AG04449 (cell line): ENCODE measurements at regions of chr19 and their contacts with region 1.

Region 1: DNA sequence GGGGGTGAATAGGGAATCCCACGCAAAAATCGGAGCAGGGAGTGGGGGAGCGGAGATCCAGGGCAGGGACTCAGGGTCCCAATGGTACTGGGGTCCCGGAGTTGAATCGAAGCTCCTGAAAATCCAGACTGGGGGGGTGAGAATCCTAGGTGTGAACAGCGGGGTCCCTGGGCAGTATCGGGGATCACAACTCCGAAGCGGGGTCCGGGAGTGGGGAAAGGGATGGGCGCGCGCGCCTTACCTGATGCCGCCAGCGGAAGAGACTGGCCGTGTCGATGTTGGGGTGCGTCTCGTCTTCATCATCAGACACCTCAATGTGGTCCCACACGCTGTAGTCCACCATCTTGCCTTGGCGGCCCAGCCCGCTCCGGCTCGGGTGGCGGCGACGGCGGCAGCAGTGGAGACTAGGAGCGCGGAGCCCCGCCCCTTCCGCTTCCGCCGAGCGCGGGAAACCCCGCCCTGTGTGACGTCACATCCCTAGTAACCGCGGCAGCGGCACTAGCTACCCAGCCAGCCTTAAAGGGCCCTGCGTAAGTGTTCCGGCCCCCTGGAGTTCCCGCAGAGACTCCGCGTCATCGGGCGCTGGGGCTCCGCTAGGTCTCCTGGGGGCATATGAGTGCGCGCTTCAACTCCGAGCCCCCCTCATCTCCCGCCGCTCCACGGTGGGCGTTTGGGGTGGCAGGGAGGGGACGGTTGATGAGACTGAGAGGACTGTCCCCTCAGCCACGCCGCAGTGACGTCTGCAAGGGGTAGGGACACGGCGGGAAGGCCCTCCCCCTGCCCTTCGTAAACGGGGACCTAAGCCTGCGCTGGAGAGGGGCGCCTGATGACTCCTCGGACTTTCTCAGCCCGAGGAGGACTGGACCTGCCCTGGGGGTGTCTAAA is at the start of gene CDC37:
- DNase-seq: peak; percentile 63
- H3K4me3 ChIP-seq: peak within 1 kb of the TSS; percentile 98
- CTCF ChIP-seq: no peak

Region 2: DNA sequence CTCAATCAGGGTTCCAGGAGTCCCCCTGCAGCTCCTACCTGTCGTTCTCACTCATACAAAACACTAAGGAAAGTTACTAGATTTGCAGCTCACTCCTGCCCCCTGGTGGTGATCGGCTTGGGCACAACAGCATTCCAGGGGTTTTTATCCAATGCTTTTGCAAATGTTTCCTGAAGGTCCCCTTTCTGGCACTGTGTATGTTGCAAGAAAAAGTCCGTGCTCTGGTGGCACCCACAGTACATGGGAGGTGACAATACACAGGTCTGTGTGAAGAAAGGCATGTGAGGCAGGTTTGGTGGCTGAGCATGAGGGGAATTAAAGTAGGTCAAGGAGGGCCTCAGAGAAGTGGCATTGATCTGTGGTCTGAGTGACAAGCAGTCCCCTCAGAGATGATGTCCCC is 14.4 kb before region 1 on chr19:
- CTCF ChIA-PET with region 1: interaction called, 70 read pairs
- POLR2A ChIA-PET with region 1: interaction called, 3 read pairs
- DNase-seq: no peak
- H3K4me3 ChIP-seq: no peak overlapping the region
- CTCF ChIP-seq: peak; percentile 84

Region 3: DNA sequence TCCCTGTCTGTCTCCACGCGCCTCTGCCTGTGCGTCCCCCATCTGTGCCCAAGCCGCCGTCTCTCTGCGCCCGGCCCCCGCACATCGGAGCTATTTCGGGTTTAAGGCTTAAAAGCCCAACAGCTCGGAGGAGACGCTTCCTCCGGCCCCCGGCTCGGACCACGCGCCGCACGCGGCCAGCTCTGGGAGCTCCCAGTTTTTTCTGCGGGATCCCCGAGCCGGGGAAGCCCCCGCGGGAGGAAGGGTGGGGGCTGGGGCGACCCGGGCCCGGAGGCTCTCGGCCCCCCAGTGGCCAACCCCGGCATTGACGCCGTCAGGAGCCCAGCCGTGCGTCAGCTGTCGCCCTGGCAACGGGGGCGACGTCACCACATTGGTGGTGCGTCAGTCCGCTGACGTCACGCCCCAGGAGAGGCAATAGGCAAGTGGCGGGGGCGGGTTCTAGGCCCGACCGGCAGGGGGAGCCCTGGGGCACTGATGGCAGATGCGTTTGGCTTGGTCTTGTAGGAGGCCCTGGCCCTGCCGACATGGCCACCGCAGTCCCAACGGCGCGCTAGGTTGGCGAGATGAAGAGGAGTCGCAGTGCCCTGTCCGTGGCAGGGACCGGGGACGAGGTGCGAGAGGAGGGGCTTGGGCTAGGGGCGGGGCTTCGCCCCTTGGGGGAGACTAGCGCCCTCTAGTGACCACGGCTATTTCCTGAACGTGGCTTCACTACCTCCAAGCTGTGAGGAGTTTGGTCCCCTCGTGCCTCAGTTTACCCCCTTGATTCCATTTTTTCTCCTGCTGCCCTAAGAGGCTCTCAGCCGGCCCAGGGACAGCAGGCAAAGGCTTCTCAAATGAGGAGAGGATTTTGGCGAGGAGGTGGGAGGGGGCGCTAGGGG is 13.2 kb after region 1 on chr19:
- CTCF ChIA-PET with region 1: interaction called, 392 read pairs
- POLR2A ChIA-PET with region 1: interaction called, 6 read pairs
- DNase-seq: no peak
- H3K4me3 ChIP-seq: peak overlapping the region; percentile 64
- CTCF ChIP-seq: peak; percentile 83

Region 4: DNA sequence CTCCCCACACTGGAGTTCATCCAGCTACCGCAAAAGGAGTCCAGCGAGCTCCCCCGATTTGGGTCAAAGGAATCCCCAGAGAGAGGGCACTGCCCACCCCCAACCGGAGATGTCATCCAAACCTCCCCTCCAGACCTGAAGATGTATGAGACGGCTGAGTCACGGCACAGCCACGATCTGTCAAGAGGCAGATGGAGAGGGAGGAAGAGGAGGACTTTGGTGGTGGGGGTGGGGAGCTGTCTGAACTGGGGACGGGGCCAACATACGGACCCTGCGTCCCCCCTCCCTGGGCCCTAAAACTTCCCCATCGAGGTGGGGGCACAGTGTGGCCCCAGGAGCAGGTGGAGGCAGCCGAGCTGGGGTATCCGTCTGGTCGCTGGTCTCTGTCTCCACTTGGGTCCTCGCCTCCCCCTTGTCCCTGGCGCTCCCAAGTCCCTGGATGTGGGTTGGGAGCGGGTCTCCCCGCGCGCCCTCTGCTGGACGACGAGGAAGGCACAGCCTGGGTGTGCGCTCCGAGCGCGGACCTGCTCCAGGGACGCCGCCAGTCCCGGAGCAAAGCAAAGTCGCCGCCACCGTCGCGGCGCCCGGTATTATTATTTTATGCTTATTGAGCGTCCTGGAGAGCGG is 20.7 kb after region 1 on chr19:
- CTCF ChIA-PET with region 1: interaction called, 392 read pairs
- POLR2A ChIA-PET with region 1: interaction called, 4 read pairs
- DNase-seq: no peak
- H3K4me3 ChIP-seq: peak overlapping the region; percentile 52
- CTCF ChIP-seq: peak; percentile 98

Region 5: DNA sequence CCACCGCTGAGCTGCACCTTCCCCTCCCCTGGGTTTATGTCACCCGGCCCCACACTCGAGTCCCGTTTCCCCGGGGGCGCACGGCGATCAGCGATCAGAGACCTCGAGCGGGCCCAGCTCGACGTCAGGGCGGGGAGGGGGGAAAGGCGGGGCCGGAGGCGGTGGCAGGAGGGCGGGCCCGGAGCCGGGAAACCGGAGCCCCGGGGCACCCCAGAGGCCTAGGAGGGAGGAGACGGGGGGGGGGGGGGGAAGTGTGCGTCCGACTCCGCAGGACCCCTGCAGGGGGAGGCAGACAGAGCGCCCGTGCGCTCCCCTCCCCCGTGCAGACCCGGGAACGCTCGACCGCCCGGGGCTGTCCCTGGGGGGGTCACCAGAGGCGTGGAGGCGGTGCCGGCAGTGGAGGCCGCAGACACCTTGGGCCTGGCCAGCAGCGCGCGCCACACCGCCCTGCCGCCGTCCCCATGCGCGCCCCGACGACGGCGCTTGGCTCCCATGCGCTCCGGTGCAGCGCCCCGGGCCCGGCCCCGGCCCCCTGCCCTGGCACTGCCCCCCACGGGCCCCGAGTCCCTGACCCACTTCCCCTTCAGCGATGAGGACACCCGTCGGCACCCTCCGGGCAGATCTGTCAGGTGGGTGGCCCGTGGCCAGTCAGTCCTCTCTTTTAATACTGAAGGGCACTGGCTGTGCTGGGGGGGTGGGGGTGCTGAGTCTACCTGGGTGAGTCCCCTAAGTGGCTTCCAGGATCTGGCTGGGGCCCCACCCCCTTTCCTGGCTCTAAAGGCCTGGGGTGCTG is 28.8 kb after region 1 on chr19:
- CTCF ChIA-PET with region 1: interaction called, 392 read pairs
- POLR2A ChIA-PET with region 1: no interaction called
- DNase-seq: no peak
- H3K4me3 ChIP-seq: peak overlapping the region; percentile 57
- CTCF ChIP-seq: no peak

Region 6: GRCh38 chr19:10454267-10454666 is 50.9 kb after region 1 on chr19:
- CTCF ChIA-PET with region 1: no interaction called
- POLR2A ChIA-PET with region 1: no interaction called
- DNase-seq: no peak
- H3K4me3 ChIP-seq: no peak overlapping the region
- CTCF ChIP-seq: no peak